K562 (cell line): ENCODE measurements at regions of chr10 and their contacts with region 1.

Region 1: GRCh38 chr10:84214612-84215235 is 10.6 kb downstream of the LRIT2 start:
- DNase-seq: peak; percentile 60 to 82 (median 72)
- ATAC-seq: peak; percentile 96
- H3K4me3 ChIP-seq: no peak overlapping the region
- H3K27ac ChIP-seq: no peak overlapping the region
- H3K4me1 ChIP-seq: peaks cover 0 to 6% of the 10 kb centered on the region in 2 experiments; a peak in 2 of 5 replicates
- H3K27me3 ChIP-seq: peaks cover 2 to 34% of the 10 kb centered on the region in 2 experiments; a peak in 4 of 5 replicates
- CTCF ChIP-seq: peak; percentile 77 to 83 (median 78)
- EP300 ChIP-seq: no peak
- POLR2A ChIP-seq: no peak
- RAD21 ChIP-seq: peak in 1 of 2 experiments; percentile 53; a peak in 2 of 4 replicates

Region 2: DNA sequence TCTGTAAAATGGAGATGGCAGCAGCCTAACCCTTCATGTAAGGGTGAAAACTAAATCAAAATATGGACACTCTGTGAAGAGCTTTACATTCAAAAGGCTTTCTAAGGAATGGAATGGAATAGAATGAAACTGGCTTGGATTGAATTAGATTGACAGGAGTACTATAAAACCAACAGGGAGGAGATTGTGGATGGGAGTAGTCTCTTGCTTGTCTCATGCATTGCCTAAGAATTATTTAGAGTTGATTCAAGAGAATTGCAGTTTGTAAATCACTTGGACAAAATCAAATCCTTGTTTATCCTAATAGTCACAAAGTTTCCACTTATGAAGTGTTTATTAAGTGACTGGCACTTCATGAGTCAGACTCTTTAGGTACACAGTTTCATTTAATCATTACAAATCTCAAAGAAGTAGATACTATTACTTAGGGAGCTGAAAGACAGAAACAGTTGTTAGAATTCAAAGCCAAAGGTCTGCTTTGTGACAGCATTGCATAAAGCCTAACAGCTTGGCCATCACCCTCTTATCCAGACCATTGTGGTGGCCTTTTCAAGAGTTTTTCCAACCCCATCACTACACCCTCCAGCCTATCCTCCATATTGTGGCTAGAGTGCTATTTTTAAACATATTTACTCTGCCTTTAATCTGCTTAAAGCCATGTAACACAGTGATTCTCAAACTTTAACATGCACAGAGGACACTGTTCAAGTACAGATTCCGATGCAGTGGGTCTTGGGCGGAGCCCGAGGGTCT is 167.3 kb before region 1 on chr10:
- CTCF ChIA-PET with region 1: no interaction called
- POLR2A ChIA-PET with region 1: no interaction called
- in situ Hi-C with region 1: no loop called
- intact Hi-C with region 1: no loop called
- DNase-seq: no peak
- ATAC-seq: no peak
- H3K4me3 ChIP-seq: no peak overlapping the region
- H3K27ac ChIP-seq: no peak overlapping the region
- H3K4me1 ChIP-seq: no peaks in the 10 kb centered on the region
- H3K27me3 ChIP-seq: no peaks in the 10 kb centered on the region
- CTCF ChIP-seq: no peak
- EP300 ChIP-seq: no peak
- POLR2A ChIP-seq: no peak
- RAD21 ChIP-seq: no peak

Region 3: DNA sequence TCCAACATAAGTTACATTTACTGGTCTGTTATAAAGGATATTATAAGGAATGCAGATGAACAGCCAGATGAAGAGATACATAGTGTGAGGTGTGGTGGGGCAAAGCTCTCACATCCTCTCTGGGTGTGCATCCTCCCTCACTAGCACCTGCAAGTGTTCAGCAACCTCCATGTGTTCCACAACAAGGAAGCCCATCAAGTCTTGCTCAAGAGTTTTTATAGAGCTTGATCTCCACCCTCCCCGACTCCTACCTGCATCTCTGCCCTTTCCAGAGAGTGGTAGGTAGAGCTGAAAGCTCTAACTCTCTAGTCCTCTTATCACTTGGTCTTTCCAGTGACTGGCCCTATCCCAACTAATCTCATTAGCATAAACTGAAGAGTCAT is 87.9 kb before region 1 on chr10:
- CTCF ChIA-PET with region 1: interaction called, 5 read pairs
- POLR2A ChIA-PET with region 1: no interaction called
- in situ Hi-C with region 1: no loop called
- intact Hi-C with region 1: loop called (anchors 1 kb)
- DNase-seq: no peak
- ATAC-seq: no peak
- H3K4me3 ChIP-seq: no peak overlapping the region
- H3K27ac ChIP-seq: no peak overlapping the region
- H3K4me1 ChIP-seq: no peaks in the 10 kb centered on the region
- H3K27me3 ChIP-seq: peaks cover 0 to 4% of the 10 kb centered on the region in 2 experiments; a peak in 3 of 5 replicates
- CTCF ChIP-seq: no peak
- EP300 ChIP-seq: no peak
- POLR2A ChIP-seq: no peak
- RAD21 ChIP-seq: no peak